Tibial artery (tissue), 4 donors: ENCODE measurements at regions of chr12 and their contacts with region 1.

Region 1: DNA sequence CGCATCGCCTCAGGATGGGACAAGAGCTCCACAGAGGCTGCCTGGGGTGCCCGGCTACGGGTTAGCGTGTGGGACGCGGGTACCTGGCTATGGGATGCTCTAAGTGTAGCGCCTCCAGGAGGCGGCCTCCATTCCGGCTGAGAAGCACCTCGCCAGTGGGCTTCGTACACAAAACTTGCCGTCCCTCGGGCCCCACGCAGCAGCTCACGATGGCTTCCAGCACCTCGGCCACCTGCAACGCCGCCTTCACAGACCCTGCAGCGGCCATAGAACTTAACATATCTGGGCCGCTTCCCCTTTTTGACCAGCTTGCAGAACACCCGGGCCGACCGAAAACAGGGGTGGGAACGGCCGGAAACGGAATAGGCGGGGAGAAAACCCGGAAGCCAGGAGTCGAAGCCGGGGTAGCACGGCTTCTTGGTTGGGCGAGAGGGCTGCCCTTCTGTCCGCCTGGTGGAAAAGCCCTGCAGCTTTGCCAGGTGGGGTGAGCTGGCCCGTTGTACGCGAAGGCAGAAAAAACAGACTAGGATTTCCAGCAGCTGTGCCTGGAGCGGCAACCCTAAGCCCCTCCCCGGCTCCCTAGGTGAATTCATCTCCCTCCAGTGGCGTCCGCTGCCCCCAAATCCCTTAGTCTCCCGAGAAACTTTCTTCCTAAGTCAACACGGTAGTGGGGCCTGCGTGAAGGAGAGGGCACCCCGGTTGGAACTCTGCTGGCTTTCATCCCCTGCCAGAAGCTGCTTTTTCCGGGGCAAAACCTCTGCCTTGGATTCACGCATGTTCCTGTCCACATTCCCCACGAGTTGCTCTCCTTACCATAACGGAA is at the start of gene BBS10:
- DNase-seq: peak; percentile 86 to 95
- H3K4me3 ChIP-seq: peak within 1 kb of the TSS; percentile 86 to 89
- H3K27ac ChIP-seq: peak within 1 kb of the TSS; percentile 90
- H3K4me1 ChIP-seq: peaks cover 0 to 24% (median 10%) of the 10 kb centered on the region in 4 donors
- H3K27me3 ChIP-seq: no peaks in the 10 kb centered on the region
- CTCF ChIP-seq: peak; percentile 37 to 41

Region 2: DNA sequence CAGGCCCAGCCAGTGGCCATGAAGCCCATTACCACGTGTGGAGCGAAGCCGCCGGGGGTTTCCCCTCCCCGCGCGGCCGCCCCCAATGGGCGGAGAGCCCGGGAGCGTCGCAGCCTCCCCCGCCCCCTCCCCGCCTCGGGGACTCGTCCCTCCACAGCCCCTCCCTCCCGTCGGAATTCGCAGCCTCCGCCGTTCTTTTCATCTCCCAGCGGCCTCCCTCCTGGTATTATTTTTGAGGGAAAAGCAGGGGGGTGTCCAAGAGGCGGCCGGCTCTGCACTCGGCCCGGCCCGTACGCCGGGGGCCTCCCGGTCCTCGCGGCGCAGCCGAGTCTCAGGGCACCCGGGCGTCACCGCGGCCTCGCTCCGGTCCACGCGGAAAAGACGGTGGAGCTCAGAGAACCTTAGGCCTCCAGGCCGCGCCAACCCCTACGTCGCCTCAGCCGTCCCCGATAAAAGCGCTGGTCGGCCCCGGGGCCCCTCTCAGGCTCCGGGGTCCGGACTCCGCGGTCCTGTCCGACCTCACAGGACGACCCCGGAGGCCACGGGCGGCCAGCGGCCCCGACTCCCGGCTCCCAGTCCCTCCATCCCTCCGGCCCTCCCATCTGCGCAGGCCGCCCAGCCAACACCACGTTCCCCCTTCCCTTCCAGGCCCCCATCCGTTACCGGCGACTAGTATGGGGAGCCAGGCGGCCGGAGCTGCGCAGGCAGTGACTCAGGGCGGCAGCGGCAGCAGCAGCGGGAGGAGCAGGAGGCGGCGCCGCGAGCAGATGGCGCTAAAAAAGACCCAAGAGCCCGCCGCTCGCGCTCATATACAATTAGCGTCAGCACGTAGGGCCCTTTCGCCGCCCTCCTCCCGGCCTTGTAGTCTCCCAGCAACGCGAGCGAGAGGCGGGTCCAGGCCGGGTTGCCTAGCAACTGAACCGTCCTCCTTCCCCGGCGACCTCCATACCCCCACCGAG is 264.1 kb before region 1 on chr12 and contains the start of gene NAP1L1:
- intact Hi-C with region 1: loop called (anchors 10 kb)
- DNase-seq: peak; percentile 98
- H3K4me3 ChIP-seq: peak within 1 kb of the TSS; percentile 89 to 92
- H3K27ac ChIP-seq: peak within 1 kb of the TSS; percentile 98 to 99
- H3K4me1 ChIP-seq: peaks cover 0 to 25% (median 12%) of the 10 kb centered on the region in 4 donors
- H3K27me3 ChIP-seq: no peaks in the 10 kb centered on the region
- CTCF ChIP-seq: no peak

Region 3: DNA sequence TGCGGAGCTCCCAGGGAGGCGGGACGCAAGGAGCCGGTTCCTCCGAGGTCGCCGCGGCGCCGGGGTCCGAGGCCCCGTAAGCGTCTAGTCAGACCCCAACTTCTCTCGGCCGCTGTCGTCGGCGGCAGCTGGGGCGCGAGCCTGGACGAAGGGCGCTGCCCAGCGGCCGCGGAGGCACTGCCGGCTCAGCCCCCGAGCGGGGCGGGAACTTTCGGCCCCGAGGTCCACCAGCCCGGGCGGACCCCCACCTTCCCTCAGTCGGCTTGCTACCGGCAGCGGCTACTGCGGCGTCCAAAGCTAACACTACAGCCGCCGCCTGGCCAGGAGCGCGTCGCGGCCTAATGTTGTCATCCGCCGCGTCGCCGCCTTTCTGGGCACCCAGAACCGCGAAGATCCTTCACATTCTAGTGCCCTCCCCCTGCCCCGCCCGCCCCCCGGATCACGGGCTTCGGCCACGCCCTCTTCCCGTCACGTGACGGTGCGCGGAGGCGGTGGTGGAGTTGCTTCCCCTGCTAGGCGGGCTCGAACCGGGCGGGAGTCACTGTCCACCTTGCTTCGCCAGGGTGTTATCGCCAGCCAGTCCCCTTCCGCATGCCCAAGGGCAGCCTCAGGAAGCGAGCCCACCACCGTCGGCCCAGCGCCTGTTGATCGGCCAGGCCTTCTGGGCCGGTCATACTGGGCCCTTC is 211.3 kb after region 1 on chr12 and contains the start of gene OSBPL8:
- intact Hi-C with region 1: loop called (anchors 10 kb)
- DNase-seq: peak; percentile 95 to 98
- H3K4me3 ChIP-seq: peak within 1 kb of the TSS; percentile 69 to 93
- H3K27ac ChIP-seq: peak within 1 kb of the TSS; percentile 93 to 97
- H3K4me1 ChIP-seq: peaks cover 0 to 27% (median 13%) of the 10 kb centered on the region in 4 donors
- H3K27me3 ChIP-seq: no peaks in the 10 kb centered on the region
- CTCF ChIP-seq: peak in 1 of 2 experiments; percentile 21

Region 4: DNA sequence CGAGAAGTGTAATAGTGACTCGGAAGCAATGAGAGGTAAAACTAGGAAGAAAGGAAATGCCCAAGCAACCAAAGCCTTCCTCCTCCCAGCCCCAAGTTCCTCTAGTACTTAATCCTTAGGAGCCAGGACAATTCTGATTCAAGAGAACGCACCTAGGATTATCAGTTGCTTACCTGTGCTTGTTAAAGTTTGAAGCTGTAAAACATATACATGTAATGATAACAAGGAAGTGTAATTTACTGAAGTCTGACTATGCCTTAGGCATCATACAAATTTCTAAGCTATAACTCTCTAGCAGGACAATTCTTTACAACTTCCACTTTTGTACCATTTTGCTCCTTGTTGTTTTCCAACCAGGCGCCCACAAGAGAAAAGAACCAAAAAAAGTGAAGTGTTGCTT is 304.1 kb after region 1 on chr12:
- intact Hi-C with region 1: no loop called
- DNase-seq: no peak
- H3K4me3 ChIP-seq: no peak overlapping the region
- H3K27ac ChIP-seq: no peak overlapping the region
- H3K4me1 ChIP-seq: no peaks in the 10 kb centered on the region
- H3K27me3 ChIP-seq: no peaks in the 10 kb centered on the region
- CTCF ChIP-seq: no peak

Region 5: GRCh38 chr12:76810671-76811419 is 462.6 kb after region 1 on chr12:
- intact Hi-C with region 1: no loop called
- DNase-seq: no peak
- H3K4me3 ChIP-seq: no peak overlapping the region
- H3K27ac ChIP-seq: peak overlapping the region in 1 of 2 donors; percentile 9
- H3K4me1 ChIP-seq: no peaks in the 10 kb centered on the region
- H3K27me3 ChIP-seq: no peaks in the 10 kb centered on the region
- CTCF ChIP-seq: no peak